ENCODE measurements at regions of chr5 and their contacts with region 1.

Region 1: GRCh38 chr5:174424219-174425053 is 299.9 kb upstream of the MSX2 start:
- DNase-seq: no peak

Region 2: DNA sequence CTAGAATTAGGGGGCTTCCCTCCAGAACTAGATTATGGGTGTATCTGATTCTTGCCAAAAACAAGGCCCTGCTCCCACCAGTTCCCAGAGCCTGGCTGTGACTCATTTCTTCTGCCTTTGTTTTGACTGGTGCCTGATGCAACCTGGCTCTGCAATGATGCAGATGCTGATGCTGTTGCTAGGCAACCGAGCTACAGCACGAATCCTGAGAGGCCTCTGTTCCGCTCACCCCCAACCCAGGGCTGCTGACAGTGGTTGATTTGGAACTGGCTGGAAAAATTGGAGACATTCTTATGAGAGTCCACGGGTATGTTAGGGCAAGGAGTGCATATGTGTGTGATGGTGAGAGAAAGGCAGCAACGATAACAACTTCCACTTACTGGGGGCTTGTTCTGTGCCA is 278.6 kb before region 1 on chr5:
- intact Hi-C with region 1: no loop called
- DNase-seq: no peak

Region 3: GRCh38 chr5:174348311-174348981 is 76.0 kb before region 1 on chr5:
- intact Hi-C with region 1: no loop called
- DNase-seq: no peak

Region 4: DNA sequence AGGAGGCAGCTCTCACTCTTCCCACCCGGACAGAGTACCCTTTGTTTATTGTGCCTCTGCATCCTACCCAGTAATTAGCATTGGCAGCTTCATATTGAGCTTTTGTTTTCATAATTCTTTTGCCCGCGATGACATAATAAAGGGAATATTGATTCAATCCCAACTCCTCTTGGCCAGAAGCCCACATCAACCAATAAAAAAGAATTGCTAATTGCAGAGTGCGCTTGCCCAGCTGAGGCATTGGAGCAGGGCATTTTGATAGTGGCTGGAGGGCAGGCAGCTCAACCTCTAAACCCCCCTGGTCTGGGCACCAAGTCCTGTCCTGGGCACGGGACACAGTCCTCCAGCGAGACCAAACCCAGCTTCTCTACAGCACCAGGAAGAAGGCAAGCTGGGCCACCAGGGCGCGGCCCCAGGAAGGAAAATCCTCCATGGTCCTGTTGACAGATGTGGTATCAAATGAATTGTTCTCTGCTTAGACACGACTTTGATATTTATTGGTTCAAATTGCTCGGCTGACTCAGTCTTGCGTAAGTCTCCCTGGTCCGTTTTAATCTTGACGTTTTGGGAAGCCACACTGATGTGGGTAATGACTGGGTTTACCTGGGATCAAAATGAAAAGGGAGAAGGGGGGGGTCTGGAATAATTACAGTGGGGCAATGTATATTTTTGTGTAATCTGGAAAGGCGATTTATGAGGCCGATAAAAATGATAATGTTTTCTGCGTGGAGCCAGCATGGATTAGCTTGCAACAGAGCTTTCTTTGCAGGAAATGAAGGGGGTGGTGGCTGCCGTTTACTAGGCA is 79.2 kb after region 1 on chr5:
- intact Hi-C with region 1: no loop called
- DNase-seq: no peak

Region 5: DNA sequence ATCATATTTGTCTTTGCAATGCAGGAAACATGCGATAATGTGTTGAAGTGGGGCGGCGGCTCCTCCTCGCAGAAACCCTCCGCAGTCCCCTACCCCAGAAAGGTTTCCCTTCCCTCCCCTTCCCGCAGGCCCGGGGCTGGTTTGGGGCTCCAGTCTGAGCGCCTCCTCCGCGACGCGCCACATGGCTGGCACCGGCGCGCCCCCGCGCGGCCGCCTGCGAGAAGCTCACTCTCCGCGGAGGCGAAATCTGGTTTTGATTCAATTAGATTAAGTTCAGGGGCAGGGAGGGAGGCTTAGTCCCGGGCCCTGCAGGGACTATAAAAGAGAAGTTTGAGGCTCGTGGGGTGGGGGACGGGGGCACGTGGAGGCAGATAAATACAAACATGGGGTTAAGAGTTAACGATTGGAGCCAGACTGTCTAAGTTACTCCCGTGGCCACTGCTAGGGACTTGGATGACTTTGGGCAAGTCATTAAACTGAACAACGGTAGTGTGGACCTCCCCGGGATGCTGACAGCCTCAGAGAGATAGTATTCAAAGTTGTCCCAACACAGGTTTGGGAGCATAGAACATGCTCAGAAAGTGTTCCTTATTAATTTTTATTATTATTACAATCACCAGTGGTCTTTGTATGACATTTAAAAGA is 369.4 kb after region 1 on chr5:
- intact Hi-C with region 1: loop called in 1 of 2 experiments (anchors 5 kb)
- DNase-seq: peak; percentile 85